Activated naive CD4-positive, alpha-beta T cell treated with anti-CD3 and anti-CD28 coated beads for 36 hours (primary cell): ENCODE measurements at regions of chr3 and their contacts with region 1.

Region 1: GRCh38 chr3:16993227-16993626 is 108.5 kb downstream of the PLCL2 start:
- DNase-seq: no peak
- H3K4me3 Mint-ChIP-seq: no peak overlapping the region
- H3K27ac Mint-ChIP-seq: no peak overlapping the region
- H3K4me1 Mint-ChIP-seq: peaks cover 77% of the 10 kb centered on the region
- H3K27me3 Mint-ChIP-seq: no peaks in the 10 kb centered on the region

Region 2: GRCh38 chr3:16866571-16866970 is 126.7 kb before region 1 on chr3:
- CTCF ChIA-PET with region 1: no interaction called
- intact Hi-C with region 1: no loop called
- DNase-seq: no peak
- H3K4me3 Mint-ChIP-seq: no peak overlapping the region
- H3K27ac Mint-ChIP-seq: no peak overlapping the region
- H3K4me1 Mint-ChIP-seq: peaks cover 15% of the 10 kb centered on the region
- H3K27me3 Mint-ChIP-seq: no peaks in the 10 kb centered on the region

Region 3: DNA sequence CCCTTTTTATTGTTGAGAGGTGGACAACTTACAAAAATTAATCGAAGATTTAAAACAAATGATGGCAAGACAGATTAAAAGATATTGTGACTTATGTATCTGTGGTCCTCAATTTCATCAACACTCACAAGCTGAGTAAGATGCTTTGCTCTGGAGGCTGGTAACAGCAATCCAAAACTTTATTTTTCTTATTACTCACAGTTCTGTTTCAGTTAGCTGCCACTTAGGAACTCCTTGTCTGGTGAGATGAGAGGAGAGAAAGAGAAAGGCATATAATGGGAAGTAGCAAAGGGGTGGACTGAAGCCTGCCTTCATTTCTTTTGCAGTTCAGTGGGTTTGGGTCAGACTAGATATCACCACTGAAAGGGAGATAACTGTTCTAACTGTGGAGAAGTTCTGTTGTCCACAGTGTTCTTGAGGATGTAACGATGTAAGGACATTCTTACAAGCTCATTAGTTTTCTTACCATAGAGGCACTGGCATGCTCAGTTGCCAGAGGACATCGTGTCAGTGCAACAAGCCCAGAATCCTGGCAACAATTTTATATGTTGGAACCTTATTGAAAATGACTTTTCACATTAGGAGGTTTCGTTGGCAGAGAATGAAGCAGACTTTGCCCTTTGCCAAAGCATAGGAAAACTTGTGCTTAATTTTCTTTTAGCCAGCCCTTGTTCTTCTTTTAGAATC is 14.8 kb before region 1 on chr3:
- CTCF ChIA-PET with region 1: no interaction called
- intact Hi-C with region 1: no loop called
- DNase-seq: no peak
- H3K4me3 Mint-ChIP-seq: no peak overlapping the region
- H3K27ac Mint-ChIP-seq: no peak overlapping the region
- H3K4me1 Mint-ChIP-seq: peaks cover 42% of the 10 kb centered on the region
- H3K27me3 Mint-ChIP-seq: no peaks in the 10 kb centered on the region

Region 4: DNA sequence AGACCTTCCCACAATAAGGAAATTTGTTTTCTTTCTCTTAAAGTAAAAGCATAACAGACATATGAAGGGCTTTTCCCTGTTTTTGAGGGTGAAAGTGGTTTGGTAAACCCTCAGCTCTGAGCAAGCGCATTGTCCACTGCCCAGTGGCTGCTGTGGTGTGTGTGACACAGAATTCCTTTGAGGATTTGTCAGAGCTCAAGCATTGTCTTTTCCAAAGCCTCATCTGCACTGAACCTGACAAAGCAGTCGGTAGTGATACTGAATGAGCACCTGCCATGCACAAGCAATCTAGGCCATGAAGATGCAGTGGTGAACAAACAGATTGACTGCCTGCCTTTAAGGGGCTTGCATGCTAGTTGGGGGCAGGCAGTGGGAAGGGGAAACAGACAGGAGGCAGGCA is 19.8 kb after region 1 on chr3:
- CTCF ChIA-PET with region 1: no interaction called
- intact Hi-C with region 1: loop called (anchors 2 kb)
- DNase-seq: no peak
- H3K4me3 Mint-ChIP-seq: no peak overlapping the region
- H3K27ac Mint-ChIP-seq: no peak overlapping the region
- H3K4me1 Mint-ChIP-seq: peaks cover 32% of the 10 kb centered on the region
- H3K27me3 Mint-ChIP-seq: no peaks in the 10 kb centered on the region